Mammary epithelial cell (primary cell): ENCODE measurements at regions of chr5 and their contacts with region 1.

Region 1: DNA sequence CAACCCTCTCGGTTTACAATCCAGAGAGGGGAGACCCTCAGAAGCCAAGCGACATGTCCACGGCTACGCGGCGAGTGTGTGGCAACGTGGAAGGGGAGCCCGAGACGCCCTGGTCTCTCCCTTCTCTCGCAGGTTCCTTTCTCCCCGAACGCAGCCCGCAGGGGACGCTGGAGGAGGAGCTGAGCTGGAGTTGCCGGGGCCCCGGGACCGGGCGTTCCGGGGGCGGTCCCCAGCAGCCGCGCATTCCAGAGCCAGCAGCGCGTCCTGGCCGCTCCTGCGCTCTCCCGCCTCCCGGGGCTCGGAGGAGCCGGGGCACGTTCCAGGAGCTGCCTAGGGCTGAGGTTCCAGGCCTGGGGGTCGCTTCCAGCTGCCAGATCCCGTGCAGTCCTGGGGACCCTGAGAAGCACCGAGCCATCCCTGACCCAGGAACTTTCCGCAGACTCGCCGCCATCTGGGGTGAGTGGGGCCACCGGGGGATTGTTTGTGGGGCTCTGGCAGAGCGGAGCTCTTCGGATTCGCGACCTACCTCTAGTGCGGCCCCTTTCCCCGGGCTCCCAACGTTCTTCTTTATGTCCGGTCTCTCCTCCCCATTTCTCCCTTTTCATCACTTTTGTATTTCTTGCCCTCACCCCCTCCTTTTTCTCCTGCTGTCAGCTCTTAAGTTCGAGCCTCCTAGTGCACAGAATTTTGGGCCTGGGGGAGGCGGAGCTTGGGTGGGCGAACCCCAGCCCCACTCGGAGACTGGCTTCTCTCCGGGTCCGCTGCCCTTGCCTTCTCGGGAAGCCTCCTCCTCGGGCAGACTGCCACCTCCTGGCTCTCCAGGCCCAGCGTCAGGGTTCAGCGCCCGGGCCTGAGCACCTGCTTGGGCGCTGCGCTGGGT is at the start of gene SMIM3:
- DNase-seq: peak; percentile 72
- H3K4me3 ChIP-seq: peak within 1 kb of the TSS; percentile 66 to 88 (median 81)
- H3K27ac ChIP-seq: peak within 1 kb of the TSS; percentile 81
- H3K4me1 ChIP-seq: peaks cover 57% of the 10 kb centered on the region
- H3K27me3 ChIP-seq: no peaks in the 10 kb centered on the region
- CTCF ChIP-seq: peak in 1 of 2 donors; percentile 67
- total RNA-seq, gene SMIM3: 17.5 to 24.3 TPM

Region 2: DNA sequence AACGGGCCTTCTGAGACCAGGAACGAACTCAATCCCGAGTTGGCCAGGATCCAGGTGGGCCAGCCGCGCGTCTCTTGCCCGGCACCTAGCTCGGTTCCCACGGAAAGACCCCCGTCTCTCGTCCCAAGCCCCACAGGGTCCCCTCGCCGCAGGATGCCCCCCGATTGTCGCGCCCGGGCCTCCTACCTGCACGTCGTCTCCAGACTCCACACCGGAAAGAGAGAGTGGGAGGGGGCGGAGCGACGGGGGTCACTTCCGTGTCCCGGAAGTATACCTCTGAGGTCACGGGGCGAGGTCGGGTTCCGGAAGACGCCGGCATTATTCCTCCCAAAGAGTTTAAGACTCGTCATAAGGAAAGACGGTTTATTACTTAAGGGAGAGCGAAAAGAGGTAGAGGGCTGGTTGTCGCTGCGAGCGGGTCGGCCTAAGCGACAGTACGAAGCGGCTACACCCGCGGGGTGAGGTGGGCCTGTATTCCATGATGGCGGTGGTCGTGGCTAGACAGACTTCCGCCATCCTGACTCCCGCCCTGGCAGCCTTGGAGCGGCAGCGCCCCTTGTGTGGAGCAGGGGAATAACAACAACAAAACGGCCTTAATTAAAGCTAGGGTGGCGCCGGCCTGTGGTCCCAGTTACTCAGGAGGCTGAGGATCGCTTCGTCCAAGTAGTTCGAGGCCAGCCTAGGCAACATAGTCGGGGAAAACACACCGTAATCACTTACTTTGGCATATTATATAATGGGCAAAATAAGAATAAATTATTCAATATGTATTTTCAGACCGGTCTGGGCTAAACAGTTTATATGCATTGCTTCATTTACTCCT is 329.0 kb before region 1 on chr5 and contains the start of gene RPS14:
- CTCF ChIA-PET with region 1: no interaction called
- dilution Hi-C with region 1: no loop called
- in situ Hi-C with region 1: no loop called
- intact Hi-C with region 1: loop called (anchors 10 kb)
- DNase-seq: peak; percentile 94
- H3K4me3 ChIP-seq: peak within 1 kb of the TSS; percentile 79 to 86 (median 79)
- H3K27ac ChIP-seq: peak within 1 kb of the TSS; percentile 88
- H3K4me1 ChIP-seq: peaks cover 17% of the 10 kb centered on the region
- H3K27me3 ChIP-seq: no peaks in the 10 kb centered on the region
- CTCF ChIP-seq: peak; percentile 80 to 86
- total RNA-seq, gene RPS14: 1,819 to 2,158 TPM

Region 3: GRCh38 chr5:150758531-150759333 is 20.0 kb before region 1 on chr5 and contains the start of gene DCTN4:
- CTCF ChIA-PET with region 1: interaction called, 5 read pairs
- dilution Hi-C with region 1: no loop called
- in situ Hi-C with region 1: no loop called
- intact Hi-C with region 1: loop called (anchors 1 kb)
- DNase-seq: peak; percentile 100
- H3K4me3 ChIP-seq: peak within 1 kb of the TSS; percentile 73 to 75 (median 74)
- H3K27ac ChIP-seq: peak within 1 kb of the TSS; percentile 93
- H3K4me1 ChIP-seq: peaks cover 23% of the 10 kb centered on the region
- H3K27me3 ChIP-seq: no peaks in the 10 kb centered on the region
- CTCF ChIP-seq: no peak
- total RNA-seq, gene DCTN4: 64.7 to 70.9 TPM

Region 4: DNA sequence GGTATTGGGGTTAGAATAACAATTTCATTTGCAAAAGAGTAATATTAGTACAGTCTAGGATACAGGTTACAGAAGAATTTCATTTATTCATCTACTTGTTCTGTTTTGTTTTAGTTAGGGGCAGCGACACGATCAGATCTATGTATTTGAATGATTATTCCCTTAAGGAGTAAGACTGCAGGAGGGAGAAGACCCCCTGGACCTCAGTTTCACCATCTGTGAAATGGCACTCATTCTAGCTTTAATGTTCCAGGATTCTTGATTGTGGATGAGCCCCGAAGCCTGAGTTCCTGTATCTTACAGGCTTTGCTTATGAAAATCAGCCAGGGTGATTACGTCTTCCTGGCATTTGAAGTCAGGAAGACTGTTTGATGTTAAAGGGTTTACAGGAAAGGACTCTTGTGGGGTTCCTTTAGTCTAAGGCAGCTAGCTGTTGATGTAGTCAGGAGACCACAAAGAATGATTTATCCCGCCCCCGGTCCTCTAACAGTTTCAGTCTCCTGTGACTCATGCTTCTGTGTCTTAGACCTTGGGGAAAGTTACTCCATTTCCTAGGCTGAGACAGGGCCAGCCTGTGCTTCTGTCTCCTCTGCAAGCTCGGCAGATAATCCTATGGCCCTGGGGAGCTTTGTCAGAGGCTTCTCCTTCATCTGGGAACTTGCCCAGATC is 11.3 kb after region 1 on chr5:
- CTCF ChIA-PET with region 1: no interaction called
- dilution Hi-C with region 1: no loop called
- in situ Hi-C with region 1: no loop called
- intact Hi-C with region 1: loop called (anchors 1 kb)
- DNase-seq: peak; percentile 100
- H3K4me3 ChIP-seq: peak overlapping the region; percentile 26 to 50 (median 37)
- H3K27ac ChIP-seq: peak overlapping the region; percentile 98
- H3K4me1 ChIP-seq: peaks cover 40% of the 10 kb centered on the region
- H3K27me3 ChIP-seq: no peaks in the 10 kb centered on the region
- CTCF ChIP-seq: no peak